Gastrocnemius medialis (tissue), 4 donors: ENCODE measurements at regions of chr15 and their contacts with region 1.

Region 1: GRCh38 chr15:85044251-85044853 is 62.7 kb downstream of the PDE8A start:
- DNase-seq: peak; percentile 44 to 46
- ATAC-seq: peak; percentile 89 to 90
- H3K4me3 ChIP-seq: no peak overlapping the region
- H3K27ac ChIP-seq: peak overlapping the region in 3 of 4 donors; percentile 69 to 76 (median 73)
- H3K4me1 ChIP-seq: peaks cover 22 to 24% of the 10 kb centered on the region in 2 donors
- H3K27me3 ChIP-seq: no peaks in the 10 kb centered on the region
- CTCF ChIP-seq: peak; percentile 35 to 77 (median 74)
- POLR2A ChIP-seq: no peak

Region 2: GRCh38 chr15:84588053-84588874 is 456.1 kb before region 1 on chr15:
- in situ Hi-C with region 1: loop called in 2 of 4 experiments (anchors 10 kb)
- intact Hi-C with region 1: loop called (anchors 10 kb)
- DNase-seq: peak; percentile 74 to 80
- ATAC-seq: peak; percentile 94 to 95
- H3K4me3 ChIP-seq: peak overlapping the region; percentile 3 to 47 (median 40)
- H3K27ac ChIP-seq: no peak overlapping the region
- H3K4me1 ChIP-seq: peaks cover 5 to 10% of the 10 kb centered on the region in 2 donors
- H3K27me3 ChIP-seq: no peaks in the 10 kb centered on the region
- CTCF ChIP-seq: peak; percentile 40 to 98 (median 72)
- POLR2A ChIP-seq: no peak

Region 3: GRCh38 chr15:84600851-84601838 is 443.2 kb before region 1 on chr15 and contains the start of gene ZSCAN2:
- in situ Hi-C with region 1: loop called in 1 of 4 experiments (anchors 10 kb)
- intact Hi-C with region 1: no loop called
- DNase-seq: peak; percentile 93 to 96
- ATAC-seq: peak; percentile 93 to 97
- H3K4me3 ChIP-seq: peak within 1 kb of the TSS; percentile 95 to 98 (median 96)
- H3K27ac ChIP-seq: peak within 1 kb of the TSS; percentile 82 to 88 (median 86)
- H3K4me1 ChIP-seq: peaks cover 6 to 9% of the 10 kb centered on the region in 2 donors
- H3K27me3 ChIP-seq: no peaks in the 10 kb centered on the region
- CTCF ChIP-seq: no peak
- POLR2A ChIP-seq: peak in 1 of 2 donors; percentile 13
- total RNA-seq, gene ZSCAN2: 6.1 to 10.3 (median 8.6) TPM

Region 4: GRCh38 chr15:84949845-84950569 is 94.3 kb before region 1 on chr15:
- in situ Hi-C with region 1: loop called in 3 of 4 experiments (anchors 5 kb)
- intact Hi-C with region 1: loop called (anchors 1 kb)
- DNase-seq: no peak
- ATAC-seq: no peak
- H3K4me3 ChIP-seq: no peak overlapping the region
- H3K27ac ChIP-seq: no peak overlapping the region
- H3K4me1 ChIP-seq: peaks cover 0 to 1% of the 10 kb centered on the region in 2 donors
- H3K27me3 ChIP-seq: no peaks in the 10 kb centered on the region
- CTCF ChIP-seq: no peak
- POLR2A ChIP-seq: no peak

Region 5: DNA sequence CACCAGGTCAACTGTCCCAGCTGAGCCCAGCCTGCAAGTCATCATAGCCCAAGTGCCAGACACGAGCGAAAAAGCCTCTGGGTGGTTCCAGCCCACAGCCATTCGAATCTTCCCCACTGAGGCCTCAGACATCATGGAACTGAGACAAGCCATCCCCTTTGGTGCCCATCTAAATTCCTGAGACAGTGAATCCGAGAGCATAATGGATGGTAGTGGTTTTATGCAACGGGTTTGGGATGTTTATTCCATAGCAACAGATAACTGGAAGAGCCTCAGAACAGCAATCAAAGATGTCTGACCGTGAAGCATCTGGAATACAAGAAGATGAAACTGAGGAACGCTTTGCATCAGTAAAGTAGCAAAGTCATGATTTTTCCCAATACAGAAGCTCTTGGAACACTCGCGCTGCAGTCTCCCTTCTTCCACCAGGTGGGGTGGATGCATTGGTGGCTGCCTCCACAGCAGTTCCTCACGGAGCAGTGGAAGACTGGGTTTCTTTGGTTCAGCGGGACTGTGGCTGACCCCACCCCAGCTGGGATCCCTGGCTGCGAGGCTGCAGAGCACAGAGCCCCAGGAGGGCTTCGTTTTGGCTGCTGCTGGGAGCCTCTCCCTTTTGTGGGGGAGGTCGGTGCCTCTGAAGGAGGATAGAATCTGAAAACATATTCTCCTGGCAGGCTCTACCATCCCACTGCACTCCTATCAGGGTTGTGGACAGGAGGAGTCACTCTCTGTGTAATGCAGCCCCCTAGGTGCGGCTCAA is 89.1 kb before region 1 on chr15:
- in situ Hi-C with region 1: loop called in 3 of 4 experiments (anchors 5 kb)
- intact Hi-C with region 1: loop called (anchors 1 kb)
- DNase-seq: peak; percentile 39 to 68
- ATAC-seq: peak; percentile 89 to 92
- H3K4me3 ChIP-seq: peak overlapping the region; percentile 34 to 51 (median 39)
- H3K27ac ChIP-seq: no peak overlapping the region
- H3K4me1 ChIP-seq: peaks cover 4 to 10% of the 10 kb centered on the region in 2 donors
- H3K27me3 ChIP-seq: no peaks in the 10 kb centered on the region
- CTCF ChIP-seq: peak; percentile 83 to 94 (median 90)
- POLR2A ChIP-seq: no peak

Region 6: DNA sequence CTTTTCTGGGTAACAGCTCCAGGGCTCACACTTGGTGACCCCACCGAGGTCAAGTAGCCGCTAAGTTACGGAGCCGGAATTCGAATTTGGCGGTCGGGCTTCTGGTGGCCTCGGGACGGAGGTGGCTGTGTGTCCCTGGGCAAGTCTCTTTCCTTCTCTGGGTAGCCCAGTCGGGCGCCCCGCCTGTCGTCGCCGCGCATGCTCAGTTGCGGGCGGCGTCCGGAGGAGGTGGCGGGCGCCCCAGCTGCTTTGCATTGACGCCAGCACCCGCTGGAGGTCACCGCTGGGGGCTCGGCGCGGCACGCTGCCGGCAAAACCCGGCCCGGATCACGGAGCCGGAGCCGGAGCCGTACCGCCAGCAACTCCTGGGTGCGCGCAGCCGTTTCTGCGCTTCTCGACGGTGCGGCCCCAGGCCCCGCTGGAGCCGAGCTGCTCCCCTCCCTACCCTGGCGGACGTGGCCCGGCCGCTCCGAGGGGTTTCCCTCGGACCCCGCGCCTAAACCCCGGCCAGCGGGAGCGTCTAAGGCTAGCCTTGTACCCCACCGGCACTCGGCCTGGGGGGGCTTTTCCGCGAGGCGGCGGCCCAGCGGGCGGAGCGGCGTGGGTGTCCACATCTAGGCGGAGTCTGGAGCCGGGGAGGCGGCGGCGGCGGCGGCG is 63.2 kb before region 1 on chr15:
- in situ Hi-C with region 1: no loop called
- intact Hi-C with region 1: loop called (anchors 2 kb)
- DNase-seq: peak; percentile 88 to 94
- ATAC-seq: peak; percentile 74 to 85
- H3K4me3 ChIP-seq: peak overlapping the region; percentile 80 to 94 (median 91)
- H3K27ac ChIP-seq: peak overlapping the region; percentile 96 to 97 (median 96)
- H3K4me1 ChIP-seq: peaks cover 27 to 29% of the 10 kb centered on the region in 2 donors
- H3K27me3 ChIP-seq: no peaks in the 10 kb centered on the region
- CTCF ChIP-seq: peak in 4 of 5 experiments; percentile 9 to 44 (median 40)
- POLR2A ChIP-seq: peak in 1 of 2 donors; percentile 61

Region 7: GRCh38 chr15:85030301-85031049 is 13.9 kb before region 1 on chr15:
- in situ Hi-C with region 1: no loop called
- intact Hi-C with region 1: no loop called
- DNase-seq: no peak
- ATAC-seq: no peak
- H3K4me3 ChIP-seq: no peak overlapping the region
- H3K27ac ChIP-seq: peak overlapping the region in 3 of 4 donors; percentile 4 to 28 (median 23)
- H3K4me1 ChIP-seq: peaks cover 34 to 58% of the 10 kb centered on the region in 2 donors
- H3K27me3 ChIP-seq: no peaks in the 10 kb centered on the region
- CTCF ChIP-seq: no peak
- POLR2A ChIP-seq: no peak